ENCODE measurements at regions of chr17 and their contacts with region 1.

Region 1: GRCh38 chr17:45031231-45032173 is 19.9 kb downstream of the DCAKD start:
- DNase-seq: no peak
- ATAC-seq: peak; percentile 53 to 77 (median 60)
- H3K4me3 ChIP-seq: no peak overlapping the region
- H3K27ac ChIP-seq: no peak overlapping the region
- H3K4me1 ChIP-seq: peaks cover 0 to 12% (median 4%) of the 10 kb centered on the region in 4 donors
- H3K27me3 ChIP-seq: no peaks in the 10 kb centered on the region
- CTCF ChIP-seq: no peak
- POLR2A ChIP-seq: no peak

Region 2: DNA sequence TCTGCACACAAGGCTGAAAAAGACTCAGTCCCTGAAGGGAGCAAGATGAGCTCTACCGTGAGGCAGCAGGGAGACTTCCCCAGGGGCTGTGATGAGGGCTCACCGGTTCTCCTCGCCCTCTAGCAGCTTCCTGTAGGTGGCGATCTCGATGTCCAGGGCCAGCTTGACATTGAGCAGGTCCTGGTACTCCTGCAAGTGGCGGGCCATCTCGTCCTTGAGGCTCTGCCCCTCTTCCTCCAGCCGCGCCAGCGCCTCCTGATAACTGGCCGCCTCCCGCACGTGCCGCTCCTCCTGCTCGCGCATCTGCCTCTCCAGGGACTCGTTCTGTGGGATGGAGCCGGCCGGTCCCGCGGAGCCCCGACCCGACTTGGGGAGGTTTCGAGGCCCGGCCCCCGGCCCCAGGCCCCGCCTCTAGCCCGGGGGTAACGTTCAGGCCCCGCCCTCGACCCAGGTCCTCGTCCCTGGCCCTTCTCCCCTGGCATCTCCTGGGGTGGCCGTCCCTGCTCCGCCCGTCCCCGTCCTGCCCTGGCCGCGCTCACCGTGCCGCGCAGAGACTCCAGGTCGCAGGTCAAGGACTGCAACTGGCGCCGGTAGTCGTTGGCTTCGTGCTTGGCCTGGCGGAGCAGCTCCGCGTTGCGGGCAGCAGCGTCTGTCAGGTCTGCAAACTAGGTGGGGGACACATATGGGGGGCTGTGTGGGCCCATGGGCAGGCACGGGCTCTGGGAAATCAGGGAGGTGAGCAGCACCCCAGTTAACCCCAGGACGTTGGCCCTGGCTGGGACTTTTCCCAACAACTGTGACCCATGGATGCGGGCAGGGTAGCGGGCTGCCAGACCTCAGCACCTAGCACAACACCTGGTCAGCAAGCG is 120.1 kb before region 1 on chr17:
- intact Hi-C with region 1: no loop called
- DNase-seq: peak; percentile 69 to 83 (median 82)
- ATAC-seq: peak; percentile 81 to 89 (median 81)
- H3K4me3 ChIP-seq: peak overlapping the region; percentile 8 to 50 (median 28)
- H3K27ac ChIP-seq: no peak overlapping the region
- H3K4me1 ChIP-seq: peaks cover 0 to 10% (median 4%) of the 10 kb centered on the region in 4 donors
- H3K27me3 ChIP-seq: no peaks in the 10 kb centered on the region
- CTCF ChIP-seq: peak; percentile 40 to 66 (median 64)
- POLR2A ChIP-seq: no peak

Region 3: DNA sequence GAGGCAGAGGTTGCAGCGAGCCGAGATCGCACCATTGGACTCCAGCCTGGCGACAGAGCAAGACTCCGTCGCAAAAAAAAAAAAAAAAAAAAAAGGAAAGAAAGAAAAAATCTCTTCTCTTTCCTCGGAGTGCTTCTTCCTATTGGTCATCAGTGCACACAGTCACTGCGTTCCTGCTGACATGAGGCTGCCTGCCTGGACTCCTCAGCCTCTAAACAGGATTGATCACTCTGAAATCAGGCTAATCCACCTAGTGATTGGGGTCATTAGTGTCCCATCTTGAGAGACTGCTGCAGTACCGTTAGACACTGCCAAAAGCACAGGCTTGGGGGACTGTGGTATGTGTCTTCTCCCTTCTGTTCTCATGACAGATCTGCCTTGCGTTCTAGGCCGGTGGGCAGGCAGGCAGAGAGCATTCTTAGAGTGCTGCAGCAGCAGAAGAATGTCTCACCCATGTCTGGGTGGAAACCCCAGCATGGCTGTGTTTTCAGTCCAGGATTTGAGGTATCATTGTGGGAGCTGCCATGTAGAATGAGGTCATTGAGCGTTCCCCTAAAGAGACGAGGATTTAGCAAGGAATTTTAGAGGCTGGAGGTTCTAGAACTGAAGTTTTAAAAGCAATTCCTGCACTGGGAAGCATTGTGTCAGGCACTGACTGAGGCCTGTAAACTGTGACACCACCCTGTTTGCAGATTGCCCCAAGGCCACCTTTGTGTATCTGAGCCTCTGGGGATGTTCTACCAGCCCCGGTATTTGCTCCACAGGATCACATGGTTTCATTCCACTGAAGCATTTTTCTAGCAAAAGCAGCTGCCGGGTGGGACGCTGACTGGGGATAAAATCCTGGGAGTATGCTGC is 70.3 kb after region 1 on chr17:
- intact Hi-C with region 1: loop called (anchors 5 to 10 kb)
- DNase-seq: no peak
- ATAC-seq: no peak
- H3K4me3 ChIP-seq: no peak overlapping the region
- H3K27ac ChIP-seq: no peak overlapping the region
- H3K4me1 ChIP-seq: no peaks in the 10 kb centered on the region
- H3K27me3 ChIP-seq: no peaks in the 10 kb centered on the region
- CTCF ChIP-seq: no peak
- POLR2A ChIP-seq: no peak

Measured in right lobe of liver (tissue), 6 donors.